MCF 10A (cell line): ENCODE measurements at regions of chr4 and their contacts with region 1.

Region 1: GRCh38 chr4:128863312-128864075 is 54.0 kb downstream of the JADE1 start:
- DNase-seq: peak; percentile 89
- H3K4me3 Mint-ChIP-seq: no peak overlapping the region
- H3K27ac Mint-ChIP-seq: peak overlapping the region; percentile 47
- H3K4me1 Mint-ChIP-seq: peaks cover 3% of the 10 kb centered on the region
- H3K27me3 Mint-ChIP-seq: no peaks in the 10 kb centered on the region
- CTCF ChIP-seq: peak; percentile 63

Region 2: DNA sequence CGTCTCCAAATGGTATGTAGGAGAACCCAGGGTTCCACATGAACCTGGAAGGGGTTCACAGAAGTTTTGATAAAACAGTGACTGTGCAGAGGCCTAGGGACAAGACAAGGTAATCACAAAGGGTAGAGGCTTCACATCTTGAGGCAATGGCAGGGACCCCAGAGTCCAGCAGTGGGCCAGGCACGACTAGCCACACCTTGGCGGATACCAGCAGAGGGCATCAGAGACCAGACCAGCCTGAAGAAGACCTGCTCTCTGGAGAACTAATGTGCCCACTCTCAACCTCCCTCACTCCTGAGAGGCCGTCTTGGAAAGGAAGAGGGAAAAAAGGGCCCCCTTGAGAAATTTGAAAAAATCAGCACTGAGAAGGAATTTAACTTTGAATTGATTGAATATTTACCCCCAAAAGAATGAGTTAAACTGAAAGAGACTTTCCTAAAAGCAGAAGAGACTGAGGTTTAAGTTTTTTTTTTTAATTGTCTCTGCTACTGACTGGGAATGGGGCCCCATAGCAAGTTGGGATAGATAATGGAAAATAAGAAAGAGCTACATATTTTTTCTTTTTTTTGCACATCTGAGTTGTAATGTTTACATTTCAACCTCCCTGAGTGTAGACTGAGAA is 297.8 kb before region 1 on chr4:
- CTCF ChIA-PET with region 1: interaction called, 15 read pairs
- POLR2A ChIA-PET with region 1: no interaction called
- intact Hi-C with region 1: loop called (anchors 1 kb)
- DNase-seq: peak; percentile 61
- H3K4me3 Mint-ChIP-seq: no peak overlapping the region
- H3K27ac Mint-ChIP-seq: peak overlapping the region; percentile 13
- H3K4me1 Mint-ChIP-seq: peaks cover 17% of the 10 kb centered on the region
- H3K27me3 Mint-ChIP-seq: no peaks in the 10 kb centered on the region
- CTCF ChIP-seq: peak; percentile 59

Region 3: DNA sequence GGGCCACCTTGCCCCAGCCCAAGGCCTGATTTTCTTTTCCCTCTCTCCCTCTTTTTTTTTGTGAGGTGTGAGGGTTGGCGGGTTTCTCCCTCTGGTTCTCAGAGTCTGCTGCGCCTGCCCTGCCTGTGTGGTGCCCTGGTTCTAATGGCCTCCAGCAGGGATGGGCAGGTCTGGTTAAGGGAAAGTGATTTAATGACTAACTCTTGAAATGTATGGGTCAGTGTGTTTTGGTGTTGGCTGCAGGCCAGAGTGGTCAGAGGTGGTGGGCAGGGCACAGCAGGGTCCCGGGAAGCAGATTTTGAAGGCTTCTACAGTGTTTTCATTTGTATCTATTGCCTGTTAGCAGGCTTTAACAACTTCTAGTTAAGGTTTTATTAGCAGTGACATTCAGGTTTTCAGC is 15.0 kb before region 1 on chr4:
- CTCF ChIA-PET with region 1: interaction called, 15 read pairs
- POLR2A ChIA-PET with region 1: no interaction called
- intact Hi-C with region 1: no loop called
- DNase-seq: no peak
- H3K4me3 Mint-ChIP-seq: no peak overlapping the region
- H3K27ac Mint-ChIP-seq: no peak overlapping the region
- H3K4me1 Mint-ChIP-seq: peaks cover 20% of the 10 kb centered on the region
- H3K27me3 Mint-ChIP-seq: no peaks in the 10 kb centered on the region
- CTCF ChIP-seq: no peak